Vagina (tissue), 2 donors: ENCODE measurements at regions of chr3 and their contacts with region 1.

Region 1: GRCh38 chr3:57169872-57170623 is 4.9 kb upstream of the IL17RD start:
- DNase-seq: peak in 1 of 2 donors; percentile 84
- H3K4me3 ChIP-seq: peak overlapping the region; percentile 43 to 44
- H3K27ac ChIP-seq: no peak overlapping the region
- H3K4me1 ChIP-seq: peaks cover 9% of the 10 kb centered on the region
- H3K27me3 ChIP-seq: no peaks in the 10 kb centered on the region
- CTCF ChIP-seq: peak; percentile 61 to 89 (median 73)
- POLR2A ChIP-seq: no peak

Region 2: GRCh38 chr3:57007513-57008460 is 162.3 kb before region 1 on chr3:
- intact Hi-C with region 1: loop called (anchors 10 kb)
- DNase-seq: peak in 1 of 2 donors; percentile 94
- H3K4me3 ChIP-seq: peak overlapping the region; percentile 3 to 28
- H3K27ac ChIP-seq: peak overlapping the region; percentile 85
- H3K4me1 ChIP-seq: peaks cover 50% of the 10 kb centered on the region
- H3K27me3 ChIP-seq: no peaks in the 10 kb centered on the region
- CTCF ChIP-seq: no peak
- POLR2A ChIP-seq: no peak

Region 3: DNA sequence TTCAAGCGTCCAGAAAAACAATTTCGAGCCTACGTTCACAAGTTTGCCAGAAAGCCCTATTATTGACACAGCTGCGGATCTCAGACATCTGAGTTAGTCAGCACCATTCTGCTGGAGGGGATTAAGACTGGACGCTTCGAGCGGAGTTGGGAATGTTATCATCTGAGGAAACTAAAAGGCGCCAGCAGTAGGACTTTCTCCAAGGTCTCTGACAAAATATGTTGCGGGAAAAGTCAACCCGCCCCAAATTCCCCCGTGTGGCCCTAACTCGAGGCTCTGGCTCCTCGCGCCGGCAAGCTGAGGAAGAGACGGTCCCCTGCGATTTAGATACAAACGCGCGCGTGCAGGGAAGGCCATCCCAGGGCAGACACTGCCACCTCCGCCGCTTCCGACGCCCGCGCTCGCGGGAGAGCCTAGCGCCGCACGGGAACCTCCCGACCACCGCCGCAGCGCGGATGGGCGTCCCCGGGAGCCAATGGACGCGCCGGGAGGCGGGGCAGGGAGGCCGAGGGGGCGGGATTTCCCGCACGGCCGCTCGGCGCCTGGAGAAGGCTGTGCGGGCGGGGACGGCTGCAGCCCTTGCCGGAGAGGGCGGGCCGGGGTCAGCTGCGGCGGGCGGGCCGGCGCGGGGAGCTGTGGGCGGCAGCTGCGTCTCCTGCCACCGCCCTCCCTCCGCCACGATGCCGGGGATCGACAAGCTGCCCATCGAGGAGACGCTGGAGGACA is 57.3 kb after region 1 on chr3 and contains the start of gene APPL1:
- intact Hi-C with region 1: loop called (anchors 1 kb)
- DNase-seq: peak in 1 of 2 donors; percentile 91
- H3K4me3 ChIP-seq: peak within 1 kb of the TSS; percentile 81 to 93
- H3K27ac ChIP-seq: peak within 1 kb of the TSS; percentile 91
- H3K4me1 ChIP-seq: peaks cover 41% of the 10 kb centered on the region
- H3K27me3 ChIP-seq: no peaks in the 10 kb centered on the region
- CTCF ChIP-seq: no peak
- POLR2A ChIP-seq: peak in 1 of 2 donors; percentile 56
- total RNA-seq, gene APPL1: 28.2 TPM